ENCODE measurements at regions of chr4 and their contacts with region 1.

Region 1: DNA sequence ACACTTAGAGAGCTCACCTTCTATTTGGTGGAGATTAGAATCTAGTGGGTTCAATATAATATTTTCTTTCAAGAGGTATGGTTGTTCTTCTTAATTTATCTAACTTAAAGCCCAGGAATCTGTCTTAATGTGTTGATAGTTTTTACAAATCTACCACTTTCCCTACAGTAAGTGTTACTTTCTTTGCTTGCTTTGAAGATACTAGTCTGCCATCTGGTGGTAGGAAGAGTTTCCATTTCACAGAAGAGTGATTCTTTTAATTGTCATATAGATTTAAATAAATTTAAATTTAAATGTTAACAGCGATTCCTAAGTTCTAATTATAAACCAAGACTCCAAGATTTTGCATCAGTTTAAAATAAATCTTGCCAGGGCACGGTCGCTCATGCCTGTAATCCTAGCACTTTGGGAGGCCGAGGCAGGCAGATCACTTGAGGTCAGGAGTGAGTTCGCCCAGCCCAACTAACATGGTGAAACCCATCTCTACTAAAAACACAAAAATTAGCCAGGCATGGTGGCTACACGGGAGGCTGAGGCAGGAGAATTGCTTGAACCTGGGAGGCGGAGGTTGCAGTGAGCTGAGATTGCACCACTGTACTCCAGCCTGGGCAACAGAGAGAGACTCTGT is 43.5 kb downstream of the NUDT9 start:
- DNase-seq: no peak
- ATAC-seq: peak; percentile 68 to 79 (median 73)
- H3K4me3 ChIP-seq: no peak overlapping the region
- H3K27ac ChIP-seq: no peak overlapping the region
- H3K4me1 ChIP-seq: peaks cover 0 to 6% (median 4%) of the 10 kb centered on the region in 3 donors
- H3K27me3 ChIP-seq: no peaks in the 10 kb centered on the region
- CTCF ChIP-seq: peak in 3 of 4 donors; percentile 14 to 48 (median 32)

Region 2: GRCh38 chr4:86522349-86522748 is 943.5 kb before region 1 on chr4:
- intact Hi-C with region 1: no loop called
- DNase-seq: no peak
- ATAC-seq: no peak
- H3K4me3 ChIP-seq: no peak overlapping the region
- H3K27ac ChIP-seq: no peak overlapping the region
- H3K4me1 ChIP-seq: no peaks in the 10 kb centered on the region
- H3K27me3 ChIP-seq: no peaks in the 10 kb centered on the region
- CTCF ChIP-seq: no peak

Region 3: GRCh38 chr4:87260477-87260876 is 205.4 kb before region 1 on chr4:
- intact Hi-C with region 1: loop called in 1 of 3 experiments (anchors 10 kb)
- DNase-seq: no peak
- ATAC-seq: no peak
- H3K4me3 ChIP-seq: no peak overlapping the region
- H3K27ac ChIP-seq: no peak overlapping the region
- H3K4me1 ChIP-seq: no peaks in the 10 kb centered on the region
- H3K27me3 ChIP-seq: no peaks in the 10 kb centered on the region
- CTCF ChIP-seq: no peak

Region 4: DNA sequence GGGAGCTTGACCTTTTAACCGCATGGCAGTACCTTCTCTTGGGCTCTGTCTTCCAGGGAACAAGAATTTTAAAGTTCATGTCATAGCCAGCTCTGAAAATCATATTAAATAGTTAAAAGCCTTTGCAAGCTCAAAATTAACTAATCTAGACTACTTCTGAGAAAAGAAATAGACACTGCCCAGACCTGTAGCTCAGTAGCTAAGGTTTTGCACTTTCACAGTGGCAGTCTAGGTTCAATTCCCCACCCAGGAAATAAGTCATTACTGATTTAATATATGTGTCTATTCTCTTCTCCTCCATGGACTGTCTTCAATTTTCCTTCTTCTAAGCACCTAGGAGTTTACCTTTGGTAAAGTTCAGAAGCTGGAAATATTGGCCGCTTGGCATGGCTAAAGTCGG is 102.3 kb before region 1 on chr4:
- intact Hi-C with region 1: loop called in 1 of 3 experiments (anchors 5 kb)
- DNase-seq: no peak
- ATAC-seq: no peak
- H3K4me3 ChIP-seq: no peak overlapping the region
- H3K27ac ChIP-seq: no peak overlapping the region
- H3K4me1 ChIP-seq: peaks cover 7 to 24% (median 21%) of the 10 kb centered on the region in 3 donors
- H3K27me3 ChIP-seq: no peaks in the 10 kb centered on the region
- CTCF ChIP-seq: no peak

Region 5: DNA sequence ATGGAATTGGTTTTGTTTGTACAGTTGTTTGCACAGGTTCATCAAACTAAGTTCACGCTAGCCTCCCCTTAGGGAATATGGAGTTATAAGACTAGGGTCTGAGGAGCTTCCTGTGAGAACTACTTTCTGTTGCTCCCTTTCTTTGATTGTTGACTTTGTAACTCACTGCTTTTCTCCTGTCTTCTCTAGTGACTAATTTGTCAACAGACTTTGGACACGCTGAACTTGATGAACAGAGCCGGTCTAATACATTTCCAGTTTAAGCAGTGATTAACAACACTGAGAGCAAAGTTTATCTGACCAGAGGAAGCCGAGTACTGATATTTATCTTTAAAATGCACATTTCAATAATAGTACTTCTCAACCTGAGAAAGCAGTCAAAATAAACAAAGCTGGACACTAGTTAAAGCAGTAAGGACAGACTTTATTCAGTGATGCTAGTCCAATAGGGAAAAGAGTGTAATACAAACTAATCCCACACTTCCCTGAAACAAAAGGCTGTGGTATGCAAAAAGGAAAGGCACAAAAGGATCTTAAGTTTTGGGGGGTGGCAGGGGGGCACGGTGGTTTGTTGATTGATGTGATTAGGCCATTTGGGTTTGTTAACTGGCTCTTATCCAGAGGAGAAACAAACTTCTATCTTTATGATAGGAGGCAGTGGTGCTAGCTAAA is 46.1 kb before region 1 on chr4:
- intact Hi-C with region 1: no loop called
- DNase-seq: no peak
- ATAC-seq: peak in 3 of 4 donors; percentile 5 to 33 (median 11)
- H3K4me3 ChIP-seq: no peak overlapping the region
- H3K27ac ChIP-seq: peak overlapping the region in 3 of 4 donors; percentile 12 to 51 (median 32)
- H3K4me1 ChIP-seq: peaks cover 18 to 31% (median 22%) of the 10 kb centered on the region in 3 donors
- H3K27me3 ChIP-seq: no peaks in the 10 kb centered on the region
- CTCF ChIP-seq: no peak